CD4-positive, alpha-beta memory T cell (primary cell): ENCODE measurements at regions of chr10 and their contacts with region 1.

Region 1: GRCh38 chr10:23438550-23439441 is at the start of gene OTUD1:
- DNase-seq: peak; percentile 89 to 97 (median 95)
- H3K4me3 ChIP-seq: peak within 1 kb of the TSS; percentile 70 to 82
- H3K4me3 Mint-ChIP-seq: peak within 1 kb of the TSS; percentile 75 to 89 (median 84)
- H3K27ac ChIP-seq: peak within 1 kb of the TSS; percentile 79
- H3K27ac Mint-ChIP-seq: peak within 1 kb of the TSS; percentile 90 to 97 (median 94)
- H3K4me1 ChIP-seq: peaks cover 44% of the 10 kb centered on the region
- H3K4me1 Mint-ChIP-seq: peaks cover 30 to 44% (median 36%) of the 10 kb centered on the region in 4 donors
- H3K27me3 ChIP-seq: no peaks in the 10 kb centered on the region
- H3K27me3 Mint-ChIP-seq: no peaks in the 10 kb centered on the region
- total RNA-seq, gene OTUD1: 36.2 to 37.7 TPM

Region 2: GRCh38 chr10:21533467-21534279 is 1905.1 kb before region 1 on chr10 and contains the start of gene MLLT10:
- CTCF ChIA-PET with region 1: no interaction called
- POLR2A ChIA-PET with region 1: no interaction called
- intact Hi-C with region 1: loop called (anchors 5 kb)
- DNase-seq: peak; percentile 93 to 96 (median 95)
- H3K4me3 ChIP-seq: peak within 1 kb of the TSS; percentile 69 to 88
- H3K4me3 Mint-ChIP-seq: peak within 1 kb of the TSS; percentile 92 to 99 (median 95)
- H3K27ac ChIP-seq: peak within 1 kb of the TSS; percentile 63
- H3K27ac Mint-ChIP-seq: peak within 1 kb of the TSS; percentile 85 to 98 (median 95)
- H3K4me1 ChIP-seq: peaks cover 19% of the 10 kb centered on the region
- H3K4me1 Mint-ChIP-seq: peaks cover 10 to 33% (median 21%) of the 10 kb centered on the region in 4 donors
- H3K27me3 ChIP-seq: no peaks in the 10 kb centered on the region
- H3K27me3 Mint-ChIP-seq: no peaks in the 10 kb centered on the region
- total RNA-seq, gene MLLT10: 64.6 to 73.4 TPM

Region 3: GRCh38 chr10:22228943-22229801 is 1209.6 kb before region 1 on chr10:
- CTCF ChIA-PET with region 1: no interaction called
- POLR2A ChIA-PET with region 1: no interaction called
- intact Hi-C with region 1: loop called (anchors 2 kb)
- DNase-seq: peak; percentile 90 to 92 (median 92)
- H3K4me3 ChIP-seq: peak overlapping the region; percentile 61
- H3K4me3 Mint-ChIP-seq: peak overlapping the region; percentile 87 to 98 (median 95)
- H3K27ac ChIP-seq: peak overlapping the region; percentile 61
- H3K27ac Mint-ChIP-seq: peak overlapping the region; percentile 86 to 100 (median 99)
- H3K4me1 ChIP-seq: peaks cover 15% of the 10 kb centered on the region
- H3K4me1 Mint-ChIP-seq: peaks cover 15 to 35% (median 16%) of the 10 kb centered on the region in 4 donors
- H3K27me3 ChIP-seq: no peaks in the 10 kb centered on the region
- H3K27me3 Mint-ChIP-seq: peaks cover 5 to 7% of the 10 kb centered on the region in 2 donors

Region 4: GRCh38 chr10:23095404-23095965 is 343.3 kb before region 1 on chr10 and contains the start of gene MSRB2:
- CTCF ChIA-PET with region 1: no interaction called
- POLR2A ChIA-PET with region 1: no interaction called
- intact Hi-C with region 1: loop called (anchors 10 kb)
- DNase-seq: peak; percentile 51 to 76 (median 63)
- H3K4me3 ChIP-seq: peak within 1 kb of the TSS; percentile 18 to 56
- H3K4me3 Mint-ChIP-seq: peak within 1 kb of the TSS; percentile 87 to 96 (median 91)
- H3K27ac ChIP-seq: peak within 1 kb of the TSS; percentile 44
- H3K27ac Mint-ChIP-seq: peak within 1 kb of the TSS; percentile 84 to 94 (median 93)
- H3K4me1 ChIP-seq: peaks cover 15% of the 10 kb centered on the region
- H3K4me1 Mint-ChIP-seq: peaks cover 23 to 46% (median 36%) of the 10 kb centered on the region in 4 donors
- H3K27me3 ChIP-seq: no peaks in the 10 kb centered on the region
- H3K27me3 Mint-ChIP-seq: no peaks in the 10 kb centered on the region
- total RNA-seq, gene MSRB2: 5.3 to 7.1 TPM

Region 5: GRCh38 chr10:23270531-23270930 is 168.3 kb before region 1 on chr10:
- CTCF ChIA-PET with region 1: no interaction called
- POLR2A ChIA-PET with region 1: no interaction called
- intact Hi-C with region 1: no loop called
- DNase-seq: no peak
- H3K4me3 ChIP-seq: no peak overlapping the region
- H3K4me3 Mint-ChIP-seq: no peak overlapping the region
- H3K27ac ChIP-seq: no peak overlapping the region
- H3K27ac Mint-ChIP-seq: no peak overlapping the region
- H3K4me1 ChIP-seq: no peaks in the 10 kb centered on the region
- H3K4me1 Mint-ChIP-seq: no peaks in the 10 kb centered on the region
- H3K27me3 ChIP-seq: no peaks in the 10 kb centered on the region
- H3K27me3 Mint-ChIP-seq: peaks cover 2 to 4% of the 10 kb centered on the region in 2 donors

Region 6: GRCh38 chr10:23362879-23363792 is 75.7 kb before region 1 on chr10:
- CTCF ChIA-PET with region 1: interaction called, 3 read pairs
- POLR2A ChIA-PET with region 1: interaction called, 70 read pairs
- intact Hi-C with region 1: loop called (anchors 1 kb)
- DNase-seq: peak; percentile 64 to 77 (median 74)
- H3K4me3 ChIP-seq: peak overlapping the region; percentile 34 to 36
- H3K4me3 Mint-ChIP-seq: peak overlapping the region; percentile 61 to 91 (median 85)
- H3K27ac ChIP-seq: peak overlapping the region; percentile 57
- H3K27ac Mint-ChIP-seq: peak overlapping the region; percentile 83 to 98 (median 97)
- H3K4me1 ChIP-seq: peaks cover 51% of the 10 kb centered on the region
- H3K4me1 Mint-ChIP-seq: peaks cover 36 to 54% (median 44%) of the 10 kb centered on the region in 4 donors
- H3K27me3 ChIP-seq: no peaks in the 10 kb centered on the region
- H3K27me3 Mint-ChIP-seq: no peaks in the 10 kb centered on the region

Region 7: DNA sequence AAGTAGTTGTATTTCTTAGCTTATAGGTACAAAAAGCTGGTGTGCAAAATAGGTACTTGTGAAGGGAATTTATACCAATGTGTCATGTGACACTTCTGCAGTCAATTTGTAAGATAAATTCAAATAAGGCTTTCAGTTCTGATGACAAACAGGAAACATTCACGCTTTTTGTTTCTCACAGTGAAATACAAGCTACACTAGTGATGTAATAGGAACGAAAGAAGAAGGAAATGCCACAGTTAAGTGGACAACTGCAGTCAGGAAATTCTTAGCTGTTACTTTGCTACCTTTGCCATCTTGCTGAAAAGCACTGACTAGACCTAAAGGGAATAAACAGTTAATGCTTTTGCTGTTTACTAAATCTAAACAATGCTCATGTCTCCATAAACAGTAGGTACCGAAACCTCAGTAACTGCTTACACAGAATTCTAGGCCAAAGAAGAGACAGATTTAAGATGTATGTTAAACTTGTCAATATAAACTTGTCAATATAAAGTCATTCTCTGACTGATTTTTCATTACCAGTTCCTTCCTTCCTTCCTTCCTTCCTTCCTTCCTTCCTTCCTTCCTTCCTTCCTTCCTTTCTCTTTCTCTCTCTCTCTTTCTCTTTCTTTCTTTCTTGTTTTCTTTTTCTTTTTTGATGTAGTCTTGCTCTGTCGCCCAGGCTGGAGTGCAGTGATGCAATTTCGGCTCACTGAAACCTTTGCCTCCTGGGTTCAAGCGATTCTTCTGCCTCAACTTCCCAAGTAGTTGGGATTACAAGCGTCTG is 10.2 kb after region 1 on chr10:
- CTCF ChIA-PET with region 1: interaction called, 3 read pairs
- POLR2A ChIA-PET with region 1: interaction called, 19 read pairs
- intact Hi-C with region 1: loop called (anchors 1 kb)
- DNase-seq: peak in 3 of 5 donors; percentile 22 to 34 (median 27)
- H3K4me3 ChIP-seq: no peak overlapping the region
- H3K4me3 Mint-ChIP-seq: peak overlapping the region in 2 of 8 donors; percentile 31 to 32
- H3K27ac ChIP-seq: no peak overlapping the region
- H3K27ac Mint-ChIP-seq: peak overlapping the region; percentile 25 to 93 (median 81)
- H3K4me1 ChIP-seq: peaks cover 26% of the 10 kb centered on the region
- H3K4me1 Mint-ChIP-seq: peaks cover 20 to 34% (median 29%) of the 10 kb centered on the region in 4 donors
- H3K27me3 ChIP-seq: no peaks in the 10 kb centered on the region
- H3K27me3 Mint-ChIP-seq: no peaks in the 10 kb centered on the region

Region 8: GRCh38 chr10:25016376-25017154 is 1577.8 kb after region 1 on chr10 and contains the start of gene THNSL1:
- CTCF ChIA-PET with region 1: no interaction called
- POLR2A ChIA-PET with region 1: no interaction called
- intact Hi-C with region 1: loop called (anchors 2 kb)
- DNase-seq: peak; percentile 95 to 99 (median 97)
- H3K4me3 ChIP-seq: peak within 1 kb of the TSS; percentile 30 to 76
- H3K4me3 Mint-ChIP-seq: peak within 1 kb of the TSS; percentile 88 to 97 (median 93)
- H3K27ac ChIP-seq: peak within 1 kb of the TSS; percentile 85
- H3K27ac Mint-ChIP-seq: peak within 1 kb of the TSS; percentile 96 to 99 (median 98)
- H3K4me1 ChIP-seq: peaks cover 22% of the 10 kb centered on the region
- H3K4me1 Mint-ChIP-seq: peaks cover 9 to 25% (median 17%) of the 10 kb centered on the region in 4 donors
- H3K27me3 ChIP-seq: no peaks in the 10 kb centered on the region
- H3K27me3 Mint-ChIP-seq: no peaks in the 10 kb centered on the region
- total RNA-seq, gene THNSL1: 6.7 to 7.5 TPM